MCF 10A (cell line): ENCODE measurements at regions of chr10 and their contacts with region 1.

Region 1: GRCh38 chr10:73886085-73886529 is 11.8 kb upstream of the CAMK2G start:
- DNase-seq: peak; percentile 83
- H3K4me3 Mint-ChIP-seq: no peak overlapping the region
- H3K27ac Mint-ChIP-seq: peak overlapping the region; percentile 50
- H3K4me1 Mint-ChIP-seq: peaks cover 42% of the 10 kb centered on the region
- H3K27me3 Mint-ChIP-seq: no peaks in the 10 kb centered on the region
- CTCF ChIP-seq: peak; percentile 88

Region 2: GRCh38 chr10:73874267-73875138 is 11.6 kb before region 1 on chr10 and contains the start of gene CAMK2G:
- CTCF ChIA-PET with region 1: interaction called, 21 read pairs
- POLR2A ChIA-PET with region 1: interaction called, 11 read pairs
- intact Hi-C with region 1: no loop called
- DNase-seq: peak; percentile 85
- H3K4me3 Mint-ChIP-seq: peak within 1 kb of the TSS; percentile 67
- H3K27ac Mint-ChIP-seq: no peak within 1 kb of the TSS
- H3K4me1 Mint-ChIP-seq: peaks cover 38% of the 10 kb centered on the region
- H3K27me3 Mint-ChIP-seq: no peaks in the 10 kb centered on the region
- CTCF ChIP-seq: no peak
- total RNA-seq, gene CAMK2G: 10.9 and 13.7 TPM in 2 replicates

Region 3: GRCh38 chr10:73931767-73932619 is 45.9 kb after region 1 on chr10:
- CTCF ChIA-PET with region 1: interaction called, 658 read pairs
- POLR2A ChIA-PET with region 1: interaction called, 361 read pairs
- intact Hi-C with region 1: loop called (anchors 2 kb)
- DNase-seq: peak; percentile 99
- H3K4me3 Mint-ChIP-seq: peak overlapping the region; percentile 4
- H3K27ac Mint-ChIP-seq: peak overlapping the region; percentile 97
- H3K4me1 Mint-ChIP-seq: peaks cover 20% of the 10 kb centered on the region
- H3K27me3 Mint-ChIP-seq: no peaks in the 10 kb centered on the region
- CTCF ChIP-seq: no peak

Region 4: GRCh38 chr10:73965890-73966768 is 80.0 kb after region 1 on chr10:
- CTCF ChIA-PET with region 1: interaction called, 6 read pairs
- POLR2A ChIA-PET with region 1: interaction called, 11 read pairs
- intact Hi-C with region 1: no loop called
- DNase-seq: peak; percentile 98
- H3K4me3 Mint-ChIP-seq: peak overlapping the region; percentile 69
- H3K27ac Mint-ChIP-seq: peak overlapping the region; percentile 99
- H3K4me1 Mint-ChIP-seq: peaks cover 17% of the 10 kb centered on the region
- H3K27me3 Mint-ChIP-seq: no peaks in the 10 kb centered on the region
- CTCF ChIP-seq: no peak

Region 5: GRCh38 chr10:74035303-74035702 is 149.2 kb after region 1 on chr10:
- CTCF ChIA-PET with region 1: interaction called, 6 read pairs
- POLR2A ChIA-PET with region 1: interaction called, 7 read pairs
- intact Hi-C with region 1: loop called (anchors 5 kb)
- DNase-seq: no peak
- H3K4me3 Mint-ChIP-seq: no peak overlapping the region
- H3K27ac Mint-ChIP-seq: peak overlapping the region; percentile 0
- H3K4me1 Mint-ChIP-seq: peaks cover 38% of the 10 kb centered on the region
- H3K27me3 Mint-ChIP-seq: no peaks in the 10 kb centered on the region
- CTCF ChIP-seq: peak; percentile 11

Region 6: DNA sequence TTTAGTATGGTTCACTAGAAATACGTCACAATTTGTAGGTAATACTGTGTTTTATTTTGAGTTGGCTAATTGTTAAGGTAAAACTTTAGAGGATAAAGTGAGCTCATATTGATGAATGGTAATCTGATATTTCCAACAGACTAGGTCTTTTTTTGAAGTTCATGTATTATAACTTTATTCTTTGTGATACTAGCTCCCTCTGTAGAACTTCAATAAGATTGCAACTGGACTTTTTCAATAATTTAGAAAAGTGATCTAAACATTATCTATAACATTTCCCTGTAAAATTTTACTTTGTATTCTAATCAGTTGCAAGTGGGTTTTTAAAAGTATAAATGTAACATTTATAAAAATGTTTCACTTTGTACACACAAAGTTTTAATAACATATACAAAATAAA is 348.5 kb after region 1 on chr10:
- CTCF ChIA-PET with region 1: interaction called, 4 read pairs
- POLR2A ChIA-PET with region 1: interaction called, 3 read pairs
- intact Hi-C with region 1: loop called (anchors 2 kb)
- DNase-seq: no peak
- H3K4me3 Mint-ChIP-seq: no peak overlapping the region
- H3K27ac Mint-ChIP-seq: no peak overlapping the region
- H3K4me1 Mint-ChIP-seq: peaks cover 16% of the 10 kb centered on the region
- H3K27me3 Mint-ChIP-seq: no peaks in the 10 kb centered on the region
- CTCF ChIP-seq: peak; percentile 42